ENCODE measurements at regions of chr16 and their contacts with region 1.

Region 1: DNA sequence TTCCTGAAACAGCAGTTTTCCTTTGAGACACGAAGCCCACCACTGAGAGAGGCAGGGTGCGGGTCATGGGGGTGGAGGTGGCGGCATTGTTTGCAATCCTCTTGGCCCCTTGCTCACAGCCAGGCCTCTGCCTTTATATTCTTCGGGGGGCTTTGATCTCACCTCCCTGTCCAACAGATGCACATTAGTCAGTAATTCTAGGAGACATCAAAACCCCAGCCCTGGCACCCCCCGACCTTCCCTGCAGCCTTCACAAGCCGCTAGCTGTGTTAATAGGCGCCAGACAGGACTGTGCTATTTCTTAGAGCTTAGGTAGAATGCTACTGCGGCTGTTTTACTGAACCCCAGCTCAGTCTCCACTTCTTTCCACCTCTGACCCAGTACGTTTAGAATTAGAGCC is 212.6 kb downstream of the RBFOX1 start:
- DNase-seq: no peak
- H3K4me3 ChIP-seq: no peak overlapping the region
- H3K27ac ChIP-seq: no peak overlapping the region
- H3K4me1 ChIP-seq: no peaks in the 10 kb centered on the region
- H3K27me3 ChIP-seq: no peaks in the 10 kb centered on the region
- CTCF ChIP-seq: no peak
- POLR2A ChIP-seq: no peak

Region 2: GRCh38 chr16:7524419-7524818 is 20.8 kb before region 1 on chr16:
- intact Hi-C with region 1: loop called (anchors 2 kb)
- DNase-seq: no peak
- H3K4me3 ChIP-seq: no peak overlapping the region
- H3K27ac ChIP-seq: no peak overlapping the region
- H3K4me1 ChIP-seq: no peaks in the 10 kb centered on the region
- H3K27me3 ChIP-seq: no peaks in the 10 kb centered on the region
- CTCF ChIP-seq: no peak
- POLR2A ChIP-seq: no peak

Measured in vagina (tissue), 2 donors.